ENCODE measurements at regions of chr1 and their contacts with region 1.

Region 1: GRCh38 chr1:224513787-224514209 is 79.2 kb upstream of the WDR26 start:
- DNase-seq: peak; percentile 69 to 92
- ATAC-seq: peak; percentile 87

Region 2: DNA sequence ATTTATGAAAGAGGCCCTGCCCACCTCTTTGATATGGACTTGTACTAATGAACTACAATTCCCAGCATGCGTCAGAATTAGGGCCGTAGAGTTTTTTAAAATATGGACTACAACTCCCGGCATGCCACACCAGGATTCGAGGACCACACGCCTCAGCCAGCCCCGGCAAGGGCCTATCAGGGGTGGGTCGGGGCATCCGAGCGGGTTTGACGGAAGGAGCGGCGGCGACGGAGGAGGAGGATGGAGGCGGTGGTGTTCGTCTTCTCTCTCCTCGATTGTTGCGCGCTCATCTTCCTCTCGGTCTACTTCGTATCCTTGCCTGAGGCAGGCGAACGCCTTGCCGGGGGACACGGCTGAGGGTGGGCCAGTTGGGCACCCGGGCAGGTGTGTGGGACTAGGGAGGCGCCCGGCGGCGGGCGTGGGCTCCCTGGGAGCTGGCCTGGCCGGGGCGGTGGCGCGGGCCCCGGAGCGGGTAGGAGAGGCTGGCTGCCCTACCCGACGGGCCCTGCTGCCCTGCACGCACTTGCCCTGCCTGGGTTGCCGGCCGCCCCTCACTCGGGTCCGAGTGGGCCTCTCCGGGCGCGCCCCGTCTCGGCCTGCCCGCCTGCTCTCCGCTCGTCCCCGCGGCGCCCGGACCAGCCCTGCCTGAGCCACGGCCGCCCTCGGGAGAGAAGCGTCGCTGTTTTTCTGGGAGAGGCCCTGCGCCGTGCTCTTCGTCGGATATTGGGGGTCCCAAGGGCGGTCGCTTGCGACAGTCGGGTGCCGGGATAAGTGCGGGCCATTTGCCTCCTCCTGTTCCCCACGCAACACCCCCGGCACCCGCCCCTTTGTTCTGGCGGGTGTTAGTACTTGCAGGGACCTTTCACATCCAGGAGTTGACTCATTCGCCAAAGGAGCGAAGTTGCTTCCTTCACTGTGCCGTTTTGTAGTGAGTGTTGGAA is 156.8 kb before region 1 on chr1 and contains the start of gene CNIH4:
- intact Hi-C with region 1: no loop called
- DNase-seq: peak; percentile 91 to 94
- ATAC-seq: peak; percentile 81
- total RNA-seq, gene CNIH4: 28.8 to 60.7 TPM

Region 3: GRCh38 chr1:224454397-224455066 is 59.3 kb before region 1 on chr1:
- intact Hi-C with region 1: no loop called
- DNase-seq: peak; percentile 36 to 69
- ATAC-seq: peak; percentile 87

Region 4: DNA sequence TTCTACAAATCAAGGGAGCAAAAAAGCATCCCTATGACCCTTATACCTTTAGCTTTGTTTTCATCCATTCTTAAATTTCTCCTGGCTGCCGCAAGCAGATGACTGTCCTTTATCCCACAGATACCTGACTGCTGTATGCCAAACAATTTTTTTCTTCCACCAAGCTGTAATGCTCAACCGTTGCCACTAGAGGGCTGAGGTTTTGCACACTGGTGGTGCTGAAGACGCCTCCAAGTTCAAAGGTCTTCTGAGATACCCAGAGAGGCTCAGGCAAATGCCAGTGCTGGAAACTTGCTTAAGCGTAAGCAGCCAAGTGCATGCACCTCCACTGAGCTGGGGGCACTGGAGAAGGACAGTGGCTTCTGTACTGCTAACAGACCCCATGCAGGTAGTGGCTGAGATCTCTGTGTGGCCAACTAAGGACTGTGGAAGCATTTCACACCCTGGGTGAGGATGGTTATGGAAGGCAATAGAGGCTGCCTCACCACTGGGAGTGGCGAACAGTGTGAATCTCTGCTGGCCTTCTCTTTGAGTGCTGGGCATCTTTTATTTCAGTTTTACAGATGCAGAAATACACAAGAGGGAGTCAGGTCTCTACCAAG is 130.9 kb after region 1 on chr1:
- intact Hi-C with region 1: loop called in 1 of 2 experiments (anchors 10 kb)
- DNase-seq: peak in 1 of 2 donors; percentile 44
- ATAC-seq: peak; percentile 91

Region 5: GRCh38 chr1:224859651-224860050 is 345.9 kb after region 1 on chr1:
- intact Hi-C with region 1: loop called in 1 of 2 experiments (anchors 5 kb)
- DNase-seq: no peak
- ATAC-seq: no peak

Region 6: DNA sequence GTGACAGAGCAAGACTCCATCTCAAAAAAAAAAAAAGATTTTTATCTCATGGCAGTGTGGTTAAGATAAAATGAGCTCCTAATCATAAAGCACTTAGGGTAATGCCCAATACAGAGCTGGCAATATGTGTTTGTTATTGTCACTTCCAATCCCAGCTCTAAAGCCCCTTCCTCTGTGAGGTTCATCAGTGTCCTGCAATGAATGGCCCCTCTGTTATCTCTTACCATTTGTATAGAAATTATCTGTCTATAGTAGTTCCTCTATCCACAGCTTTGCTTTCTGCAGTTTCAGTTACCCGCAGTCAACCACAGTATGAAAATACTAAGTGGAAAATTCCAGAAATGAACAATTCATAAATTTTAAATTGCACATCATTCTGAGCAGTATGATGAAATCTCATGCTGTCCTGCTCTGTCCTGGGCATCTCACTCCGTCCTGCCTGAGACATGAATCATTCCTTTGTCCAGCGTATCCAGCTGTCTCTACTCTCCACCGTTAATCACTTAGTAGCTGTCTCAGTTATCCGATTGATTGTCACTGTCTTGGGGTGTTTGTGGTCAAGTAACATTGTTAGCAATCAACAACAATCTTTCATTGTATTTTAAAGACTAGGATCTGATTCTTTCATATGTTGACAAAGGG is 365.5 kb after region 1 on chr1:
- intact Hi-C with region 1: no loop called
- DNase-seq: no peak
- ATAC-seq: no peak

Region 7: GRCh38 chr1:224922404-224923164 is 408.8 kb after region 1 on chr1:
- intact Hi-C with region 1: loop called in 1 of 2 experiments (anchors 2 kb)
- DNase-seq: no peak
- ATAC-seq: peak; percentile 93

Measured in left colon (tissue), 2 donors.